ENCODE measurements at regions of chr11 and their contacts with region 1.

Region 1: DNA sequence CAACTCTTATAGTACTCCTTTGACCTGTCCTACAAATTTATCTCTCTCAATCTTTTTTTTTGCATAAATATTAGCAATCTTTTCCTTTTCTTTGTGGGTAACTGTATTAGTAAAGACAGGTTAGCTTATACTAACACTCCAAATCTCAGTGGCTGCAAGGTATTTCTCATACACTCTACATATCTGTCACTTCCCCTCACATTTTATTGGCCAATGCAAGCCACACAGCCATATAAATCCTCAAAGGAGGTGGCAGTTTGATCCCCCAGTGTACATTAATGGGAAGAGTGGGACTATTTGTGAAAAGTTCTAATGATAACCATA is 42.6 kb upstream of the EED start:
- DNase-seq: no peak
- H3K4me3 ChIP-seq: peak overlapping the region; percentile 2 to 14
- H3K27ac ChIP-seq: no peak overlapping the region
- H3K4me1 ChIP-seq: no peaks in the 10 kb centered on the region
- H3K27me3 ChIP-seq: no peaks in the 10 kb centered on the region
- CTCF ChIP-seq: no peak
- POLR2A ChIP-seq: no peak

Region 2: DNA sequence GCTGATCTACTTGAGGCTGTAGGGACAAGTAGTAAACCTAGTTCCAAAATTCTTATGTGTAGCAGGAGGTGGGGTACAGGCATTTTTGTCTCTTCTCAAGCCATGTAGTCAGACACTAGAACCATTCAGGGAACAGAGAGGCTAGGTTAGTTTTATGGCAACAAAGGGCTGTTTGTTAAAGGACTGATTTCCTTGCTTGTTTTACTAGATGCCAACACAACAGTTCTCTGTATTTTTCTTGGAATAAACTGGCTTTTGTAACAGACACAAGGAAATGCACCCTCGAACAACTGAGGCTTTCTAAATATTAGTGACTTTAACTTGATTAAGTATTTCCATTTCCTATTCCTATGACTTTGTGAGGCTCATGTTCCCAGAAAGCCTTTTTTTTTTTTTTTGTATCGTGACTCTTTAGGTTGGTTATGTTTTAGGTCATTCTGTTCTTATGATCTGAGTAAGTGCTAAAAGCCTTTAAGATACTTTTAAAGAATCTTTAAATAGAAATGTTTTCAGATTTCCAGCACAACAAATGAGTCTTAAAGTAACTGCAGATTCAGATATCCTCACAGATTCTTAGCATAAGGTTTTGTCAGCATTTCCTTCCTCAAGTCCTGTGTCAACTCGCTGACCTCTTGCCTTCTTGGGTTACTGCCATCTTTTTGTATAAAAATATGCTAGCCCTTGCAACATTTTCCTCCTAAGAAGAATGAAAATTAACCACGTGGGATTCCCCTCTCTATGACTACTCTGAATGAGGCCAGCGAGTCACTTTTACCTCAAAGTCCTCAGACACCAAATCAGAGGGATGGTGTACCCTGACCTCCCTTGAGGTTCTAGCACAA is 254.3 kb before region 1 on chr11:
- intact Hi-C with region 1: loop called (anchors 5 kb)
- DNase-seq: no peak
- H3K4me3 ChIP-seq: no peak overlapping the region
- H3K27ac ChIP-seq: no peak overlapping the region
- H3K4me1 ChIP-seq: no peaks in the 10 kb centered on the region
- H3K27me3 ChIP-seq: no peaks in the 10 kb centered on the region
- CTCF ChIP-seq: no peak
- POLR2A ChIP-seq: no peak

Region 3: GRCh38 chr11:86335122-86335767 is 133.3 kb after region 1 on chr11:
- intact Hi-C with region 1: no loop called
- DNase-seq: no peak
- H3K4me3 ChIP-seq: no peak overlapping the region
- H3K27ac ChIP-seq: no peak overlapping the region
- H3K4me1 ChIP-seq: no peaks in the 10 kb centered on the region
- H3K27me3 ChIP-seq: no peaks in the 10 kb centered on the region
- CTCF ChIP-seq: no peak
- POLR2A ChIP-seq: no peak

Measured in prostate gland (tissue), 2 donors.